ENCODE measurements at regions of chr9 and their contacts with region 1.

Region 1: DNA sequence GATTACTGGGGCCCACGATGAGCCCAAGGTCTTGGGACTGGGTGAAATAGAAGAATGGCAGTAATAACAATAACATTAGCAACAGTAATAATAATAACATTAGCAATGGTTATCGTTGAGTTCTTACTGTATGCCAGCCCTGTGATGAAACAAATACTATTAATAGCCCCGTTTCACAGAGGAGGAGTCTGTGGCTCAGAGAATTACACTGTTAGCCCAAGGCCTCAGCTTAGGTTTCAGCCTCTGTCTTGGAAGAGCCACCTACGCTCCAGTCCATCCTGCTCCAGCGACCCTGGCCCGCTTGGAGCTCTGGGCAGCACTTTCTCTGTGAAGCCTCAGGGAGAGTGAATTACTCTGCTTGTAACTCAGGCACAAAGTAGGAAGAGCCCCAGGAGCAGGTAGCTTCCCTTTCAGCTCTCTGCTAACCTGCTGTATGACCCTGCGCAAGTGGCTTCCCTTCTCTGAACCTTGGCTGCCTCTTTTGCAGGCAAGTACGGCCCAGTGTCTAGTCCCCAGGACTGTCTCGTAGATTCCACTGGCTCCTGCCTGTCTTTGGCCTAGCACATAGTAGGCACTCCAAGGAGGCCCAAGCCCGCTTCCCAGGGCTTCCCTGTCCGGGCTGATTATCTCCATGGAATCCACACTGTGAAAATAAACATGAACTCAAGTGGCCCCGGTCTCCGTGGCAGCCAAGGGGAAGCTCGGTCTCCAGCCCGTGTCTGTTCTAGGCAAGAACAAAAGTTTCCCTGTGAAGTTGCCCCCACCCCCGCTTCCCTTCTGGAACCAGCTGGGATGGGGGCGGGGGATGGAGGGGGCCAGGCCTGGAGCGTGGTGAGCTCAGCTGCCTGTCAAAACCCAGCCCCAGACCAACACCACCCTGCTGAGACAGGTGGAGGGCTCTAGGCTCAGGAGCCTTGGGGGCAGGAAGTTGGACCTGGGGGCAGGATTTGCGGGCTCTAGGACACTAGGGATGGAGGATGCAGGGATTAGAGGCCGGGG is 26.2 kb upstream of the LMX1B start:
- DNase-seq: peak; percentile 32
- ATAC-seq: peak; percentile 50
- H3K4me3 Mint-ChIP-seq: no peak overlapping the region
- H3K27ac Mint-ChIP-seq: no peak overlapping the region
- H3K4me1 Mint-ChIP-seq: peaks cover 19% of the 10 kb centered on the region
- H3K27me3 Mint-ChIP-seq: no peaks in the 10 kb centered on the region
- CTCF ChIP-seq: no peak

Region 2: GRCh38 chr9:126564711-126565110 is 22.8 kb before region 1 on chr9:
- CTCF ChIA-PET with region 1: interaction called, 11 read pairs
- POLR2A ChIA-PET with region 1: no interaction called
- DNase-seq: peak; percentile 61
- ATAC-seq: peak; percentile 88
- H3K4me3 Mint-ChIP-seq: no peak overlapping the region
- H3K27ac Mint-ChIP-seq: no peak overlapping the region
- H3K4me1 Mint-ChIP-seq: no peaks in the 10 kb centered on the region
- H3K27me3 Mint-ChIP-seq: no peaks in the 10 kb centered on the region; the same call in 1 of the 2 replicates
- CTCF ChIP-seq: peak; percentile 37; the same call in 1 of the 2 replicates

Region 3: DNA sequence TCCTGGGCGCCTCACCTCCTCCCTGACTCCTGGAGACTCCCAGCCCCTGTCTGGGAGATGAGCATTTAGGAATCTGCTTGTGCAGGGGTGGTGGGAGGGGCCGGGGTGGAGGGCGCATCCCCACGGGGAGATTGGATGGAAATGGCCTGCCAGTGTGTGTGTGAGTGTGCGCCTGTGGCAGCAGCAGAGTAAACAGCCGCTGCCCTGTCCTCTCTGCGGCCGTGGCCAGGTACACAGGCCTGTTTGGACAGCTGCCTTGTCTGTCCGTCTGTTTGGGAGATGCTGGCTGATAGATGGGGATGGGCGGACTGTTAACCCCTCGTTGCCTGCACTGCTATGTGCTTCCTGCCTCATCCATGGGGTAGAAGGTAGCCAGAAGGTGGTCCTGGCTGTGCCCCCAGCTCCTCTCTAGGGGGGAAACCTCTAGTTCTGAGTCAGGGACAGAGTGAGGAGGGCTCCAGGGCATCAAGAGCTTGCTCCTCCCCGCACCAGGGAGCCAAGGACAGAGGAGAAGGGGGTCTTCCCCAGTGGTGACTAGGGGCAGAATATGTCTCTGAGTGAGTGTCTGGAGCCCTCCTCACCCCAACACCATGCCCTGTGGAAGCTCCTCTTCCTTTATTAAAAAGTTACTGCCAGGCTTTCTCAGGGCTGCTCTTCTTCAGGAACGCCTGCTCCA is 86.3 kb after region 1 on chr9:
- CTCF ChIA-PET with region 1: no interaction called
- POLR2A ChIA-PET with region 1: no interaction called
- DNase-seq: peak; percentile 50
- ATAC-seq: no peak
- H3K4me3 Mint-ChIP-seq: peak overlapping the region; percentile 24; the same call in 1 of the 2 replicates
- H3K27ac Mint-ChIP-seq: no peak overlapping the region
- H3K4me1 Mint-ChIP-seq: peaks cover 49% of the 10 kb centered on the region
- H3K27me3 Mint-ChIP-seq: peaks cover 70% of the 10 kb centered on the region
- CTCF ChIP-seq: no peak